ENCODE measurements at regions of chr5 and their contacts with region 1.

Region 1: DNA sequence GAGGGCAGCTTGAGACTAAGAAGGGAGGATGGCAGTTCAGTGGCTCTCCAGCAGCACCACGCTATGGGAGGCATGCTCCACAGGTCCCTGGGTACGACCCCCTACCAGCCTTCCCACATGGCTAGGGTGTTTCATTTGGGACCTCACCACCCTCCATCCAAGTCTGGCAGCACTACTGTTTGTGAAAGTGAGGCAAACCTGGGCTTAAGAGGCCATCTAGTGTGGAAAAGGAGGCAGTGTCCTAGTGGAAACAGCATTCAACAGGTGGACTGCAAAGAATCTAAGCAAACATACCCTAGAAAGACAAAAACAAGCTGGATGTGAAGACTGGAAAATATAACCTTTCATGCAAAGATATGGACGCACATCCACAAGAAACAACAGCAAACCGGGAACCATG is 4.8 kb upstream of the C5orf47 start:
- DNase-seq: peak; percentile 44
- H3K4me3 Mint-ChIP-seq: no peak overlapping the region
- H3K27ac Mint-ChIP-seq: no peak overlapping the region
- H3K4me1 Mint-ChIP-seq: no peaks in the 10 kb centered on the region
- H3K27me3 Mint-ChIP-seq: peaks cover 19% of the 10 kb centered on the region
- CTCF ChIP-seq: peak; percentile 59

Region 2: DNA sequence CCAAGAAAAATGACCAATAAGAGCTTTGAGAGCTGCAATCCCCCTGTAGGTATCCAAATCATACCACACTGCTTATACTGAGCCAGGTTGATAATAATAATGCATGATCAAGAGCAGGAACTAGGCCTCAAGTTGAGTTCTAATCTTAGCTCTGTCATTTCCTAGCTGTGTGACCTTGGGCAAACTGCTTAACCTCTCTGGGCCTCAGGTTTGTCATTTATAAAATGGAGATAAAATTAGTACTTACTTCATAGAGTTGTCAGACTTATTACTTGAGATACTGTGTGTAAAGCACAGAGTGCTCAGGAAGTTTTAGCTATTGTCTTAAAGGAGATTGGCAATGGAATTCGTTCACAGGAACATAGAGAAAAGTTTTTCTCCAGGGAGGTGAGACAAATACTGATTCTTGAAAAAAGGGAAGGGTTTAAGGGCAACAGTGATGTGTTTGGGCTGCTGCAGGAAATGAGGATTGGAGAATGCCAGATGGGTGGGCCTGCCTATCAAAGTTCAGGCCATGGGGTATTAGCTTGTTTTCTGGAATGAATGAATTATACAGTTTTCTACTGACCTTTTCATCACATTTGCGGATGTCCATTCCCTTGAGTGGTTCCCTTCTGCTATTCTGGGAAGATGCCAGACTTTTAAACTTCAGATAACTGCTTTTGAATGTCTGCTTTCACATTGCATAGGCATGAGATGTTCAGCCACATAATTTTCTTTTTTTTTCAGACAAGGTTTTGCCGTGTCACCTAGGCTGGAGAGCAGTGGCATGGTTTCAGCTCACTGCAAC is 1010.9 kb before region 1 on chr5:
- CTCF ChIA-PET with region 1: interaction called, 3 read pairs
- POLR2A ChIA-PET with region 1: no interaction called
- intact Hi-C with region 1: loop called (anchors 10 kb)
- DNase-seq: no peak
- H3K4me3 Mint-ChIP-seq: no peak overlapping the region
- H3K27ac Mint-ChIP-seq: no peak overlapping the region
- H3K4me1 Mint-ChIP-seq: no peaks in the 10 kb centered on the region
- H3K27me3 Mint-ChIP-seq: no peaks in the 10 kb centered on the region
- CTCF ChIP-seq: no peak

Region 3: DNA sequence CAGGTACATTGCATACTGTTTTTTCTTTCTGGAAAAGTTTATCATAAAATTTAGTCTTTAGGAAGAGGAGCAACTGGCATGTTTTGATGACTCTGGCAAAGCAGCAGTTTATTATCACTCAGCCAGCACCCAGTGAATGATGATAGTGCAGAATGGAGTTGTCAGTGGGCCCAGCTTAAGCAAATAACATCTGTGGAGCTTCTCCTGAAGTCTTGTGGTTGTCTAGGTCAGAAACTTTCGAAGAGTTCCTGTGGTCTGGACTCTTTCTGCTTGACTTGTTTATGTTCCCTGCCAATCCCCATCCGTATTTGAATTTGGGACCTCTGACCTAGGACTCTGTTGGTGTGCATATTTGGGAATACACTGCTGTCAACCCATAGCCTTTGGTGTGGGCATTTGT is 33.4 kb before region 1 on chr5:
- CTCF ChIA-PET with region 1: no interaction called
- POLR2A ChIA-PET with region 1: no interaction called
- intact Hi-C with region 1: no loop called
- DNase-seq: no peak
- H3K4me3 Mint-ChIP-seq: no peak overlapping the region
- H3K27ac Mint-ChIP-seq: no peak overlapping the region
- H3K4me1 Mint-ChIP-seq: no peaks in the 10 kb centered on the region
- H3K27me3 Mint-ChIP-seq: no peaks in the 10 kb centered on the region
- CTCF ChIP-seq: no peak

Region 4: DNA sequence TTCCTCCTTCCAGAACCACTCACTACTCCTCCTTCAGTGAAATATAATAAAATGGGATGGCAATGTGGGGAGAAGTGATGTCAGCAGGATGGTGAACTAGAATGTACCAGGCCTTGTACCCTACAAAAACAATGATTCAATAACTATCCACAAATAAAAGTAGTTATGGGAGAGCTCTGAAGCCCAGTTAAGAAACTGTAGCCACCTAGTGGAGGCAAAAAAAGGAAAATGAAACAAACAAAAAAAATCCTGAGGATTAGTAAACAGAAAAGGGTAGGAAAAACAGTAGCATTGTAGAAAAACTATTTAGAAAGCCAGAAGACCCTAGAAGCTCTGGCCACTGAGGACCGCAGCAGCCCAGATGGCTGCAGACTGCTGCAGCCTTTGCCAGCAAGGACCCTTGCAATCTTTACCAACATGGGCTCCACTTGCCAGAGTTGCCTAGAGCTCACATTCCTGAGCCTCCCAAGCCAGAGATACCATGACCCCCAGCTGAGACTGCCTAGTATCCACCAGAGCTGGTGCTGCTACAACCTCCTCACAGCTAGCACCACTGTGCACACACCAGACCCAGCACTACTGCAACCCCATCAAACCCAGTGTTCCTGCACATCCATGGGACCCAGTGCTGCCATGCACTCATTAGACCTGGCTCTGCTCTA is 480.4 kb after region 1 on chr5:
- CTCF ChIA-PET with region 1: no interaction called
- POLR2A ChIA-PET with region 1: no interaction called
- intact Hi-C with region 1: no loop called
- DNase-seq: no peak
- H3K4me3 Mint-ChIP-seq: no peak overlapping the region
- H3K27ac Mint-ChIP-seq: no peak overlapping the region
- H3K4me1 Mint-ChIP-seq: peaks cover 10% of the 10 kb centered on the region
- H3K27me3 Mint-ChIP-seq: no peaks in the 10 kb centered on the region
- CTCF ChIP-seq: peak; percentile 28